A673 (cell line): ENCODE measurements at regions of chr11 and their contacts with region 1.

Region 1: DNA sequence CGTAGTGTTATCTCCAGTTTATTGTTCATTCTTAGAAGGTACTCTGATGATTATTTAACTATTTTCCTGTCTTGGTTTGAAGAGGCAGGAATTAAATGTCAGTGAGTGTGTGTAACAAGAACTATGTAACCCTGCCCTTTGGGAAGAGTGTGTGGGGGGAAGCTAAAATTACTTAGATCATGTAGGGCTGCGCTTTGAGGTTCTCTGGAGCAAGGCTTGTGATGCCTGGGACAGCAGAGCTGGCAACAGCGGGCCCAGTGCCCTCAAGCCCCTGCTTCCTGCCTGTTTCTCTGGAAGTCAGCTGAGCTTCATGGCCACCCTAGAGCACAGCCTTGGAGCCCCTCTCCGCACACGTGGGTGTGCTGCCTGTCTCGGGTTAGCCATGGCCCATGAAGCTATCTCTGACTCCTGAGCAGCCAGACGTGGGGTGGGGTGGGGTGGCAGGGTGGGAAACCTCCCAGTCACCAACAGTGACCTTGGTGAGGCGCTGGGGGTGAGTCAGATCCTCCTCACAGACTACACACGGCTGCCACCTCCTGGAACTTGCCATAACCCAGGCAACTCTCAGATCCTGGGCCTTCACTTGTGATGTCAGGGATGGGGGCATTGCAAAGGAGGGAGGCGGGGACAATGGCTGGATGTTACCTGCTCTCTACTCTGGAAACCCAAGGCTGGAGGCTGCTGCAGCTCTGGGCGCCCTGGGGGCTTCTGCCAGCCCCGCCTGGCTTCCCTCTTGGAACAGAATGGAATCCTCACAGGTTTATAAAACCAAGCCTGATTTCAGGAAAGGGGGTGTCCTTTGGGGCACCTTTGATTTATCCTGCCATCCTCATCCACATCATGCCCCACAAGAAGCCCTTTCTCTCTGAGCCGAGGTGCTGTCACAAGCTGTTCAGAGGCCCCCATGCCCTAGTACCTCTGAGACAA is 88.6 kb downstream of the SNX19 start:
- DNase-seq: peak; percentile 87
- H3K4me3 ChIP-seq: no peak overlapping the region
- H3K27ac ChIP-seq: no peak overlapping the region
- H3K4me1 ChIP-seq: peaks cover 4% of the 10 kb centered on the region
- H3K27me3 ChIP-seq: no peaks in the 10 kb centered on the region
- CTCF ChIP-seq: peak; percentile 69

Region 2: DNA sequence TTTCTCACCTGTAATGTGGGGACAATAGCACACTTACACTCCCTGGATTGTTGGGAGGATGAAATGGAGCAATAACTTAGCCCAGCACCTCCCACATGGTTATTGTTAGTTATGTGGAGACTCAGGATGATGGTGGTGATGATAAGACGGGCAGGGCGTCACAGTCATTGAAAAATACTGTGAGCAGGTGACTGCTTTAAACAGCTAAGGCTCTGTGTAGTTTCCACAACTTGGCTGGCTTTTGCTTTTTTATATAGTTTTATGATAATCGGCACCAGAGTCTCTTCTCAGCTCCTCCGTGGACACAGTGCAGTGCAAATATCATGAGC is 224.2 kb before region 1 on chr11:
- CTCF ChIA-PET with region 1: interaction called, 10 read pairs
- POLR2A ChIA-PET with region 1: no interaction called
- intact Hi-C with region 1: no loop called
- DNase-seq: no peak
- H3K4me3 ChIP-seq: no peak overlapping the region
- H3K27ac ChIP-seq: no peak overlapping the region
- H3K4me1 ChIP-seq: peaks cover 6% of the 10 kb centered on the region
- H3K27me3 ChIP-seq: no peaks in the 10 kb centered on the region
- CTCF ChIP-seq: no peak